ENCODE measurements at regions of chr3 and their contacts with region 1.

Region 1: DNA sequence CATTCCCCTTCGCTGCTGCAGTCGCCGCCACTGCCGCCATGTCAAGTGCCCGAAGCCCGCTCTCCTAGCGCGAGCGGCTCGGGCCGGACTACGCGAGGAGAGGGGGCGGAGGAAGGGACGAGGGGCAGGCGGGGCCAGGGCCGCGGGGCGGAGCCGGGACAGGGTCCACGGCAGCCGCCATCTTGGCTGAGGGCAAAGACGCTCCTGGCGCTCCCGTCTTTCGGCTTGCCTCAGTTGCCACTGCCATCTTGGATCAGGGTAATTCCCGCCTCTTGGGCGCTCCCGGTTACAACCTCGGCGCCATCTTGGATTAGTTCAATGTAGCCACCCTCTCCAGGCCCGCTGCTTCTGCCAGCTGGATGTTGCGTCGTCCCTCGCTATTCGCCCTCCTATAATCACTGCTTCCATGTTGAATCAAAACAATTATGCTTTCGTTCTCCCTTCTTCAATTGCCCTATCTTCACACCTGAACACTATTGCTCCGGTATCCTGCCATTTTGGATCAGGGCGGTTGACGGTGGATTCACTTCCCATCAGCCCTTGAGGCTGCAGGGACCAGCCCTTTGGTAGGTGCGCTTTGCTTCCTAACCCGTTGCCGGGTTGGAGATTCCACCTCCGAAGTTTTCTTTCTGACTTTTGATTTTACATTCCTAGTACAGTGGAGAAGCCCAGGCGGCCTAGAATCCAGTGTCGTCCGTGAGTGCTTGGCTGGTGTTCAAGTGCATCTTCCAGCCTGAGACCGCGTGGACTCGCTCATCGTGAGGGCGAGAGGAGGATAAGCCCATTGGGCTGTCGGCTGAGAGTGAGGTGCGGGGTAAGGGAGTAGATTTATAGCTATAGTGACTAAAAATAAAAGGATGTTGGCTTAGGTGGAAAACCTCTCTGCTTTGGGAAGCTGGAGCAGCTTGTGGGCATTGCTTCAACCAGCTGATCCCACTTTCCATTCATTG is at the start of gene HACD2:
- DNase-seq: peak; percentile 94
- ATAC-seq: peak; percentile 93
- H3K4me3 Mint-ChIP-seq: no peak within 1 kb of the TSS
- H3K27ac Mint-ChIP-seq: peak within 1 kb of the TSS; percentile 82
- H3K4me1 Mint-ChIP-seq: peaks cover 25% of the 10 kb centered on the region
- H3K27me3 Mint-ChIP-seq: no peaks in the 10 kb centered on the region
- CTCF ChIP-seq: no peak
- total RNA-seq, gene HACD2: 31.9 and 32.9 TPM in 2 replicates

Region 2: DNA sequence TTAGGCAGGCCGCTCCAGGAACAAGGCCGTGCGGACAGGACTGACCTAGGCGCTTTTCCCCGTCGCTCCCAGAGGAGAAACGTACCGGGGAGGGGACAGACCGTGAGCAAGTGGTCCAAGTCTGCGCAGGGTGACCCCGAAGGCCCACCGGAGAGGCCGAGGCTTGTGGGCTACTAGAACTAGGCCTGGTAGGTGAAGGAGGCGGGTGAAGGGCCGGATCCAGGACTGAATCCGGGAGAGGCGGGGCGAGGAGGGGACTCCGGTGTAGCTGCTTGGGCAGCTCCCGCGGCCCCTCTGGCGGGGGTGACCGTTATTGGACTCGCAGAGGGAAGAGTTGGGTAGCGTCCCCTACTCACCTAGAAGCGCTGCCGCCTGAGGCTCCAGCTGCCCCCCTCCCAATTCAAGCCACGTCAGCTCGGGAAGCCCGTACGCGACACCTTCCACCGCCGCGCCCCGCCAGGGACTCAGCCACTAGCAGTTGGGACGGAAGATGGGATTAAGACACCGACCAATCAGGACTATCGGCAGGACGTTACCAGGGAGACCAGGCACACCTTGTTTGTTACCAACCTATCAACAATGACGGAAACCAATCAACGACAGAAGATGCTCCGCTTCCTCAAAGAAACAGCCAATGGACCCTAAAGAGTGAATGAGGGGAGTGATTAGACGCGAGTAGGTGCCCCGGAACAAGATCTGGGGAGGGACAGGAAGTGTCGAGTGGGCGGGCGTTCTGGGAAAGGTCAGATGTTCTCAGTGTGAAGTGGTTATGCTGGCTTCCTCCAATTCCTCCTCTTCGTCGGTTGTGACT is 1835.8 kb before region 1 on chr3 and contains the start of gene GOLGB1:
- CTCF ChIA-PET with region 1: no interaction called
- POLR2A ChIA-PET with region 1: no interaction called
- intact Hi-C with region 1: loop called (anchors 10 kb)
- DNase-seq: peak; percentile 81
- ATAC-seq: peak; percentile 93
- H3K4me3 Mint-ChIP-seq: no peak within 1 kb of the TSS
- H3K27ac Mint-ChIP-seq: no peak within 1 kb of the TSS
- H3K4me1 Mint-ChIP-seq: peaks cover 4% of the 10 kb centered on the region
- H3K27me3 Mint-ChIP-seq: no peaks in the 10 kb centered on the region
- CTCF ChIP-seq: no peak
- total RNA-seq, gene GOLGB1: 37.3 and 44.7 TPM in 2 replicates

Region 3: DNA sequence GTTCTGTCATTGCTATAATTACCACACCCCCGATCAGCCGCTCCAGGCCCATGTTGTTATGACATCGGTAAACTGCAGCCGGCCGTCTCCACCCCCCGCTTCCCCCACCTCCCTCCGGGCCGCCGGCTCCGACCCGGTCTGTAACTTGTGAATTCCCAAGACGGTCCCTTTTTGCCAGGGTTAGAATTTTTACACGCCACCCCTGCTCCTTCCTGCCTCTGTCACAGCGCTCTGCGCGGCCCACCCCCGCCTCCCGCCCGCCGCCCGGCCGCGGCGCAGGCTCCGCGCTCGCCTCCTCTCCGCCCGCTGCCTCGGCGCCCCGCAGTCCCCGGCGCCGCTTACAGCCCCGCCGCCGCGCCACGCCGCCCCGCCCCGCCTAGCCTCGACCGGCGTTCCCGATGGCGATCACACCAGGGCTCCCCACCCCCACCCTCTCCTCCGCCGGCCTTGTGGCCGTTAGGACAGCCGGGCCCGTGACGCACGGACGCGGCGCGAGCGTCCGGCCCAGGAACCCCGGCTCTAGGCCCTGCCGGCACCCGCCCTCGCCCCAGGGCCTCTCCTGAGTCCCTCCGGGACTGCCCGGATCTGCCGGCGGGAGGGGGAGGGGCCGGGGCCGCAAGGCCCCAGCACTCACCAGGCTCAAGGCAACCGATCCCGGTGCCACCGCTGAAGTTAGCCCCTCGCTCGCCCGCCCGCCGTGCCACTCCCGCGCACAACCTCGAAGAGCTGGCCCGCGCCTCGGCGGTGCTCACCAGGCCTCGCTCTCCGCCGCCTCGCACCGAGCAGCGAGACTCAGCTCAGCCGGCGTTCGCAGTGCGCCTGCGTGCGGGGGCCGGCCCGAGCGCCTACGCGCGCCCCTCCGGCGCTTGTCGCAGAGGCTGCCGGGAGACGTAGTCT is 1070.9 kb before region 1 on chr3 and contains the start of gene KPNA1:
- CTCF ChIA-PET with region 1: no interaction called
- POLR2A ChIA-PET with region 1: no interaction called
- intact Hi-C with region 1: loop called (anchors 10 kb)
- DNase-seq: peak; percentile 92
- ATAC-seq: peak; percentile 83
- H3K4me3 Mint-ChIP-seq: peak within 1 kb of the TSS; percentile 85
- H3K27ac Mint-ChIP-seq: peak within 1 kb of the TSS; percentile 82
- H3K4me1 Mint-ChIP-seq: peaks cover 42% of the 10 kb centered on the region
- H3K27me3 Mint-ChIP-seq: no peaks in the 10 kb centered on the region
- CTCF ChIP-seq: no peak
- total RNA-seq, gene KPNA1: 72.9 and 76.4 TPM in 2 replicates

Region 4: DNA sequence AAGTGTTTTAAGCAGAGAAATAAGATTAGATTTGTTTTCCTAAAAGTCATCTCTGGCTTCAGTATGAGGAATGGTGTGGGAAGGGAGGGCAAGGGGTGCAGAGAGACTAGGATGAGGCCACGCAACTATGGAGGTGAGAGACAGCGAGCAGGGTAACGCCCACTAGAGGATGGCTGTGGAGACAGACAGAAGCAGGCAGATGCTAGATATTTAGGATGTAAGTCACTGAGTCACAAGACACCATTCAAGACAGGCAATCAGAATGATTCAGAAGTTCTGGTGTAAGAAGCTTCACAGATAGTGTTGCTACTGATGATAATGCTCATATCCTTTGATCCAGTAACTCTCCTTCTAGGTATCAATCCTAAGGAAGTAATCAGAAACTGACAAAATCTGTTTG is 810.7 kb before region 1 on chr3:
- CTCF ChIA-PET with region 1: no interaction called
- POLR2A ChIA-PET with region 1: no interaction called
- intact Hi-C with region 1: no loop called
- DNase-seq: no peak
- ATAC-seq: no peak
- H3K4me3 Mint-ChIP-seq: no peak overlapping the region
- H3K27ac Mint-ChIP-seq: peak overlapping the region; percentile 9
- H3K4me1 Mint-ChIP-seq: peaks cover 17% of the 10 kb centered on the region
- H3K27me3 Mint-ChIP-seq: no peaks in the 10 kb centered on the region
- CTCF ChIP-seq: no peak

Region 5: GRCh38 chr3:122793568-122794416 is 791.5 kb before region 1 on chr3 and contains the start of gene HSPBAP1:
- CTCF ChIA-PET with region 1: no interaction called
- POLR2A ChIA-PET with region 1: no interaction called
- intact Hi-C with region 1: loop called (anchors 5 kb)
- DNase-seq: peak; percentile 91
- ATAC-seq: peak; percentile 67
- H3K4me3 Mint-ChIP-seq: no peak within 1 kb of the TSS
- H3K27ac Mint-ChIP-seq: peak within 1 kb of the TSS; percentile 86
- H3K4me1 Mint-ChIP-seq: peaks cover 30% of the 10 kb centered on the region
- H3K27me3 Mint-ChIP-seq: no peaks in the 10 kb centered on the region
- CTCF ChIP-seq: no peak
- total RNA-seq, gene HSPBAP1: 18.1 and 20.6 TPM in 2 replicates

Region 6: GRCh38 chr3:123605789-123606234 is 20.5 kb after region 1 on chr3:
- CTCF ChIA-PET with region 1: no interaction called
- POLR2A ChIA-PET with region 1: interaction called, 5 read pairs
- intact Hi-C with region 1: loop called (anchors 1 kb)
- DNase-seq: no peak
- ATAC-seq: peak; percentile 63
- H3K4me3 Mint-ChIP-seq: peak overlapping the region; percentile 13
- H3K27ac Mint-ChIP-seq: peak overlapping the region; percentile 19
- H3K4me1 Mint-ChIP-seq: peaks cover 28% of the 10 kb centered on the region
- H3K27me3 Mint-ChIP-seq: no peaks in the 10 kb centered on the region
- CTCF ChIP-seq: no peak

Region 7: DNA sequence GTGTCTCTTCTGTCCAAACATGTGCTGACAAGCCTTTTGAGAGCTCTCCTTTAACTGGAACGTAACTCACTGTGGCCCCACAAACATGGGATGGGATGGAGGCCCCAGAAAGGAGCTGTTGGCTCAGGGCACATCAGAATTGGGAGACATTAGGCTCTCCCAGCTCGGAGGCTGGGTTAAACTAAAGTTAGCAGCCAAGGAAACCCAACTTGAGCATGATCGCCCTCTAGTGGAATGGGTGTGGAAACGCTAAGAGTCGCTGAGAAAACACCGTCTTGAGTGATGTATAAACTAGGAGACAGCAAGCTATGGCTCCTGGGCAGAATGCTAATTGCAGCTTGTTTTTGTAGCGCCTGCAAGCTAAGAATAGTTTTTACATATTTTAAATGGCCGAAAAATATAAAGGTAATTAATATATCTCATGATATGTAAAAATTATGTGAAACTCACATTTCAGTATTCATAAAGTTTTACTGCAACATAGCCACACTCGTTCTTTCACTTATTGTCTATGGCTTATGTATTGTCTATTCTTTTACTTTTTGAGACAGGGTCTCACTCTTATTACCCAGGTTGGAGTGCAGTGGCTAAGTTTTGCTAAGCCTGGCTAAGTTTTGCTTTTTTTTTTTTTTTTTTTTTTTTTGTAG is 138.4 kb after region 1 on chr3:
- CTCF ChIA-PET with region 1: no interaction called
- POLR2A ChIA-PET with region 1: no interaction called
- intact Hi-C with region 1: loop called (anchors 1 kb)
- DNase-seq: no peak
- ATAC-seq: peak; percentile 65
- H3K4me3 Mint-ChIP-seq: no peak overlapping the region
- H3K27ac Mint-ChIP-seq: no peak overlapping the region
- H3K4me1 Mint-ChIP-seq: no peaks in the 10 kb centered on the region
- H3K27me3 Mint-ChIP-seq: peaks cover 4% of the 10 kb centered on the region
- CTCF ChIP-seq: peak; percentile 39

Region 8: GRCh38 chr3:125055913-125056745 is 1470.9 kb after region 1 on chr3 and contains the start of gene HEG1:
- CTCF ChIA-PET with region 1: no interaction called
- POLR2A ChIA-PET with region 1: no interaction called
- intact Hi-C with region 1: loop called (anchors 10 kb)
- DNase-seq: peak; percentile 66
- ATAC-seq: peak; percentile 78
- H3K4me3 Mint-ChIP-seq: peak within 1 kb of the TSS; percentile 86
- H3K27ac Mint-ChIP-seq: peak within 1 kb of the TSS; percentile 68
- H3K4me1 Mint-ChIP-seq: peaks cover 39% of the 10 kb centered on the region
- H3K27me3 Mint-ChIP-seq: peaks cover 6% of the 10 kb centered on the region
- CTCF ChIP-seq: no peak
- total RNA-seq, gene HEG1: 6.1 and 7.2 TPM in 2 replicates

Region 9: GRCh38 chr3:125351814-125352456 is 1766.7 kb after region 1 on chr3:
- CTCF ChIA-PET with region 1: no interaction called
- POLR2A ChIA-PET with region 1: no interaction called
- intact Hi-C with region 1: no loop called
- DNase-seq: no peak
- ATAC-seq: no peak
- H3K4me3 Mint-ChIP-seq: peak overlapping the region; percentile 12
- H3K27ac Mint-ChIP-seq: peak overlapping the region; percentile 50
- H3K4me1 Mint-ChIP-seq: peaks cover 81% of the 10 kb centered on the region
- H3K27me3 Mint-ChIP-seq: no peaks in the 10 kb centered on the region
- CTCF ChIP-seq: no peak